BJ (cell line): ENCODE measurements at regions of chr10 and their contacts with region 1.

Region 1: GRCh38 chr10:101311185-101312066 is 42.5 kb upstream of the BTRC start:
- DNase-seq: no peak
- H3K4me3 ChIP-seq: no peak overlapping the region
- H3K27me3 ChIP-seq: peaks cover 32% of the 10 kb centered on the region
- CTCF ChIP-seq: no peak

Region 2: GRCh38 chr10:100894589-100895294 is 416.7 kb before region 1 on chr10:
- CTCF ChIA-PET with region 1: no interaction called
- POLR2A ChIA-PET with region 1: no interaction called
- DNase-seq: no peak
- H3K4me3 ChIP-seq: no peak overlapping the region
- H3K27me3 ChIP-seq: no peaks in the 10 kb centered on the region
- CTCF ChIP-seq: no peak

Region 3: GRCh38 chr10:101258179-101258885 is 53.1 kb before region 1 on chr10:
- CTCF ChIA-PET with region 1: no interaction called
- POLR2A ChIA-PET with region 1: no interaction called
- DNase-seq: no peak
- H3K4me3 ChIP-seq: no peak overlapping the region
- H3K27me3 ChIP-seq: peaks cover 10% of the 10 kb centered on the region
- CTCF ChIP-seq: no peak

Region 4: DNA sequence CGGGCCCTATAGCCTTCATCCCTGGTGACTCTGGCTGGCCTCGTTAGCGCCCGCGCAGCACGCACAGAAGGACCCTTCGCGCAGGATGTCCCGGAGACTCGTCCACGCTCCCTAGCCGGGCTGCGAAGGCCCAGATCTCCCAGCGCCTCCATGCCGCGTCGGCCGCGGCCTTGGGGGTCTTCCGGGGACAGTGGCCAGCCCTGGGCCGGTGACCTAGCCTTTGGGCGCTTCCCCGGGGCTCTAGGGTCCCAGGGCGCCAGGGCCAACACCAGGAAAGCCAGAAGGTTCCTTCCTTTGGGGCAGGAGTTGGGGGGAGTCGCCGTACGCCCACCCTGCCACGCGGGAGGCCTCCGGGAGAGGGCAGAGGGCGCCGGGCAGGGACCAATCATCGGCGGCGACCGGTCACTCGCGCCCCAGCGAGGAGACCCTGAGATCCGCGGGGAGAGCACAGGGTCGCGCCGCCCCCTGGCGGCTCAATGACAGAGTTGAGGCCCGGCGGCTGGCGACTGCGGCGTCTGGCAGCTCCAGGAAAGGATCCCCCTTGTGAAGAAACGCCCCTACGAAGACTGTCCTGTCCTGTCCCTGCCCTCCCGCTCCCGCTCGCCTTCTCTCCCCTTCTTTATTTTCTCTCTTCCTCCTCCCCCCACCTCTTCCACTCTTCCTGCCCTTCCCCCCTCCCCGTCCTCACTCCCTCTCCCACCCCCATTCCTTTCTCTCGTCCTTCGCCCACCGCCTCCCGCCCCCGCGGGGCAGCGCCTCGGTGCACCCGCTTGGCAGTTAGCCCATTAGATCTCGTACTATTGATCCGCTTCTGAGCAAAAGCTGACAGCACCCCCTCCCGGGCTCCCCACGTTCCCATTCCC is 19.9 kb before region 1 on chr10:
- CTCF ChIA-PET with region 1: interaction called, 15 read pairs
- POLR2A ChIA-PET with region 1: no interaction called
- DNase-seq: no peak
- H3K4me3 ChIP-seq: peak overlapping the region; percentile 40
- H3K27me3 ChIP-seq: peaks cover 46% of the 10 kb centered on the region
- CTCF ChIP-seq: peak; percentile 69

Region 5: GRCh38 chr10:101297901-101298486 is 13.4 kb before region 1 on chr10:
- CTCF ChIA-PET with region 1: interaction called, 15 read pairs
- POLR2A ChIA-PET with region 1: no interaction called
- DNase-seq: no peak
- H3K4me3 ChIP-seq: no peak overlapping the region
- H3K27me3 ChIP-seq: peaks cover 28% of the 10 kb centered on the region
- CTCF ChIP-seq: peak; percentile 93